Mammary epithelial cell (primary cell): ENCODE measurements at regions of chr7 and their contacts with region 1.

Region 1: GRCh38 chr7:113159746-113160339 is 41.5 kb upstream of the SMIM30 start:
- DNase-seq: peak; percentile 21
- H3K4me3 ChIP-seq: no peak overlapping the region
- H3K27ac ChIP-seq: no peak overlapping the region
- H3K4me1 ChIP-seq: no peaks in the 10 kb centered on the region
- H3K27me3 ChIP-seq: no peaks in the 10 kb centered on the region
- CTCF ChIP-seq: peak; percentile 59 to 82

Region 2: DNA sequence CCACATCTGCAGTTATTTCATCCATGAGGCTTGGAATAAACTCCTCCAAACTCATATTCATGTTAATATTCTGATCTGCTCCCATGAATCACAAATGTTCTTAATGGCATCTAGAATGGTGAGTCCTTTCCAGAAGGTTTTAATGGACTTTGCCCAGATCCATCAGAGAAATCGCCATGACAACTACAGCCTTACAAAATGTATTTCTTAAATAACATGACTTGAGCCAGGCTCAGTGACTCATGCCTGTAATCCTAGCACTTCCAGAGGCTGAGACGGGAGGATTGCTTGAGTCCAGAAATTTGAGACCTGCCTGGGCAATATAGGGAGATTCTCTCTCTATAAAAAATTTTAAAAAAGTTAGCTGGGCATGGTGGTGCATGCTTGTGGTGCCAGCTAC is 267.6 kb before region 1 on chr7:
- CTCF ChIA-PET with region 1: no interaction called
- dilution Hi-C with region 1: no loop called
- in situ Hi-C with region 1: no loop called
- intact Hi-C with region 1: no loop called
- DNase-seq: peak; percentile 17
- H3K4me3 ChIP-seq: no peak overlapping the region
- H3K27ac ChIP-seq: no peak overlapping the region
- H3K4me1 ChIP-seq: no peaks in the 10 kb centered on the region
- H3K27me3 ChIP-seq: no peaks in the 10 kb centered on the region
- CTCF ChIP-seq: no peak

Region 3: GRCh38 chr7:113015032-113015645 is 144.7 kb before region 1 on chr7:
- CTCF ChIA-PET with region 1: interaction called, 3 read pairs
- dilution Hi-C with region 1: no loop called
- in situ Hi-C with region 1: no loop called
- intact Hi-C with region 1: loop called (anchors 5 kb)
- DNase-seq: peak; percentile 27
- H3K4me3 ChIP-seq: no peak overlapping the region
- H3K27ac ChIP-seq: no peak overlapping the region
- H3K4me1 ChIP-seq: peaks cover 12% of the 10 kb centered on the region
- H3K27me3 ChIP-seq: no peaks in the 10 kb centered on the region
- CTCF ChIP-seq: peak; percentile 42 to 58

Region 4: GRCh38 chr7:113246738-113247137 is 86.9 kb after region 1 on chr7:
- CTCF ChIA-PET with region 1: no interaction called
- dilution Hi-C with region 1: no loop called
- in situ Hi-C with region 1: no loop called
- intact Hi-C with region 1: no loop called
- DNase-seq: no peak
- H3K4me3 ChIP-seq: no peak overlapping the region
- H3K27ac ChIP-seq: no peak overlapping the region
- H3K4me1 ChIP-seq: no peaks in the 10 kb centered on the region
- H3K27me3 ChIP-seq: no peaks in the 10 kb centered on the region
- CTCF ChIP-seq: no peak

Region 5: GRCh38 chr7:113374955-113375354 is 215.1 kb after region 1 on chr7:
- CTCF ChIA-PET with region 1: no interaction called
- dilution Hi-C with region 1: no loop called
- in situ Hi-C with region 1: no loop called
- intact Hi-C with region 1: no loop called
- DNase-seq: no peak
- H3K4me3 ChIP-seq: no peak overlapping the region
- H3K27ac ChIP-seq: no peak overlapping the region
- H3K4me1 ChIP-seq: no peaks in the 10 kb centered on the region
- H3K27me3 ChIP-seq: no peaks in the 10 kb centered on the region
- CTCF ChIP-seq: no peak